Heart right ventricle (tissue), 16 donors: ENCODE measurements at regions of chr6 and their contacts with region 1.

Region 1: DNA sequence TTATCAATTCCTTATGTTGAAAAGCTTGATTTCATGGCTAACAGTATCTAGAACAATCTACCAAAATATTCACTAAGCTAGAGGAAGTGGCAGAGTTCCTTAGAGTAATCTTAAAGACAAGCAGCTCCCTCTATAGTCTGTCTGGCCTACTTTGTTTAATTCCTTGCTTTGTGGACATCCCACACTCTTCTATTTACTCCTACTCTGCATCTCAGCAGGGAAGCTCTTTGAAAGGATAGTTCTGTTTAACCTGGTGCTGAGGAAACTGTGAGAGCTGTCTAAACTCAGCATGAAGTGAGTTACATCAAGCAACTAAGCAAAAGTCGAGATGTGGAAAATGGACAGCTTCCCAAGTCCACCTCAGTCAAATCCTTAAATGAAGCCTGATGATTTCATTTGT is 4.3 kb downstream of the REV3L start:
- DNase-seq: no peak
- ATAC-seq: no peak
- H3K4me3 ChIP-seq: no peak overlapping the region
- H3K27ac ChIP-seq: peak overlapping the region in 1 of 10 donors; percentile 6
- H3K4me1 ChIP-seq: peaks cover 0 to 52% (median 41%) of the 10 kb centered on the region in 9 donors
- H3K27me3 ChIP-seq: no peaks in the 10 kb centered on the region
- CTCF ChIP-seq: peak in 6 of 9 donors; percentile 29 to 59 (median 48)

Region 2: DNA sequence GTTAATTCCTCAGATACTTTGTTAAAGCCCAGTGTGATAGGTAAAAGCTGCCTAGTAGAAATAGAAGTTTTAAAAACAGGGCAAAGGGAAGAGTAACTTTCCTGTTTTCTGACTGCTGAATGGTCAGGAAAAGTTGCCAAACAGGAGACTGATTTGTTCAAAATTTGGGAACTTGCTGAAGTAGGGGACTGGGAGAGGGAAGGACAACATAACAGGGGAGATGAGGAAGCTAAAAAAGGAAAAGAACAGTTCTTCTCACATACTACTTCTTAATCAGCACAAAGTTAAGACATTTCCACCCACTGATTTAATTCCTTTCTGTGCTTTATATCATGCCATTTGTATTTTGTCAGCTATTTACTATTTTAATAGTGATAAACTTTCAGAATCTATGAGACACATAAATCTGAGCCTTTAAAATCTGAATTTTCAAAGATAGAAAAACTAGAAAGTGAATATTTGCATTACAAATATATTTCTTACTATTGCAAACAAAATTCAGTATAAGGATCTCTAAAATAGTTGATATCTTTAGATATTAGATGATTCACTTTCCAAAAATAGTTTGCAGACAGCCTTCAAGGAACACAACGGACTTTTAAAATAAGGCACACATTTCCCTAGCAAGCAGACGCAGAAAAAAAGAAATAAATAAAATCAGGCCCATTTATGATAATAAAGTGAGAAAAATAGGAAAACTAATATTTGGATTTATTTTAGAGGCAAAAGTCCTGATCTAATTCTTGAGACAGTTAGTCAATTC is 428.3 kb before region 1 on chr6:
- intact Hi-C with region 1: no loop called
- DNase-seq: no peak
- ATAC-seq: peak in 2 of 8 donors; percentile 16 to 47
- H3K4me3 ChIP-seq: no peak overlapping the region
- H3K27ac ChIP-seq: peak overlapping the region in 1 of 10 donors; percentile 60
- H3K4me1 ChIP-seq: peaks cover 0 to 15% (median 5%) of the 10 kb centered on the region in 9 donors
- H3K27me3 ChIP-seq: no peaks in the 10 kb centered on the region
- CTCF ChIP-seq: no peak

Region 3: DNA sequence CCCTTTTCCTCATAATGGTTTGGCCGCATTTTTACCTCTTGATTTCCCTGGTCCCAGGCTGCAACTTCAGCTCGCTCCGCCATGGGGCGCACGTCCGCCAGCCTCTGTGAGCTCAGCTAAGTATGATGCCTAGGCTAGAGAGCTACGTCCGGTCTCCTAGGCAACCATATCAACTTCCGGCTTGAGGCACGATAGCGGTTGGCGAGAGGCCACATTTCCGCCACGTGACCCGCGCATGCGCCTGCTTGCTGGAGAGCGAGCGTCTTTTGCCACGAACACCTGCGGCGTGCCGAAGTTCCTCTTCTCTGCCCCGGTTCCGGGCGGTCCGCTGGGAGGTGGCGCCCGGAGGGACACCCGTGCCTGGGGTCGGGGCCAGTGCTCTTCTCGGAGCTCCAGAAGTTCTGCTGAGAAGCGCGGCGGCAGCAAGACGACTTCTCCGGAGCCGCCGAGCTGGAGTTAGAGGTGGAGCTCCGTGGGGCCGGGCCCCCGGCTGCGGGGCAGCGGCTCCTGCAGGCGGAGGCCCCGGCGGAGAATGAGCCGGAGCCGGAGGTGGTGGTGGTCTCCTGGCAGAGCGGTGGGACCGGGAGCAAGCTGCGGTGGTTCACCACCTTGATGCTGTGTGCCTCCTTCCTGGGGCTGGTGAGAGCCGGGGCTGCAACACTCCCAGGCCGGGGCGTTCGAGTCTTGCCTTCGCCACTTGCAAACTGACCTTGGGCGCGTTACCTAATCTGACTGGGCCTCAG is 219.5 kb before region 1 on chr6:
- intact Hi-C with region 1: loop called in 3 of 10 experiments (anchors 5 to 10 kb)
- DNase-seq: peak; percentile 99
- ATAC-seq: peak; percentile 98 to 99 (median 99)
- H3K4me3 ChIP-seq: peak overlapping the region; percentile 57 to 96 (median 70)
- H3K27ac ChIP-seq: peak overlapping the region in 9 of 10 donors; percentile 71 to 92 (median 88)
- H3K4me1 ChIP-seq: peaks cover 0 to 27% (median 17%) of the 10 kb centered on the region in 9 donors
- H3K27me3 ChIP-seq: peaks cover 0 to 14% (median 2%) of the 10 kb centered on the region in 7 donors
- CTCF ChIP-seq: peak; percentile 90 to 98 (median 95)

Region 4: GRCh38 chr6:111353912-111354462 is 124.8 kb before region 1 on chr6:
- intact Hi-C with region 1: loop called in 2 of 10 experiments (anchors 5 to 10 kb)
- DNase-seq: no peak
- ATAC-seq: peak in 4 of 8 donors; percentile 21 to 48 (median 42)
- H3K4me3 ChIP-seq: no peak overlapping the region
- H3K27ac ChIP-seq: peak overlapping the region in 5 of 10 donors; percentile 6 to 36 (median 27)
- H3K4me1 ChIP-seq: peaks cover 0 to 28% (median 11%) of the 10 kb centered on the region in 9 donors
- H3K27me3 ChIP-seq: no peaks in the 10 kb centered on the region
- CTCF ChIP-seq: no peak

Region 5: GRCh38 chr6:111361648-111362047 is 117.1 kb before region 1 on chr6:
- intact Hi-C with region 1: loop called in 6 of 10 experiments (anchors 10 kb)
- DNase-seq: peak in 1 of 2 donors; percentile 38
- ATAC-seq: peak in 4 of 8 donors; percentile 34 to 61 (median 55)
- H3K4me3 ChIP-seq: no peak overlapping the region
- H3K27ac ChIP-seq: no peak overlapping the region
- H3K4me1 ChIP-seq: no peaks in the 10 kb centered on the region
- H3K27me3 ChIP-seq: no peaks in the 10 kb centered on the region
- CTCF ChIP-seq: peak in 8 of 9 donors; percentile 28 to 61 (median 47)

Region 6: DNA sequence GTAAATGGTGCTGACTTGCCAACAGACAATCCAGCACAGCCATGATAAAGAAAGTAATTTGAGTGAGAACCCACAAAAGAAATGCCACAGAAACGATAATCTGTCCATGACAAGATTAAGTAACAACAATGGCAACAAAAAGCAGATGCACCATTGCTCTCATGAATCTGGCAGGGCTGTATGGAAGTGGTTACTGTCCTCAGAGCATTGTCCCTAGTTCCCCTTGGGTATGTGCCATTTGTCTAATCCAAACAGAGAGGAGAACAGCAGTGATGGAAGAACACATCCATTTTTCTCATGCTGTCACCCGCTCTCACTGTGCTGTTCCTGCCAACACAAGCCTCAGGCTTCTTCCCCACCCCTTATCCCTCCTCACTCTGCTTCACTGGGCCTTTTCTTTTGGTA is 61.6 kb before region 1 on chr6:
- intact Hi-C with region 1: loop called in 1 of 10 experiments (anchors 10 kb)
- DNase-seq: peak in 1 of 2 donors; percentile 37
- ATAC-seq: peak; percentile 84 to 97 (median 86)
- H3K4me3 ChIP-seq: no peak overlapping the region
- H3K27ac ChIP-seq: peak overlapping the region in 3 of 10 donors; percentile 2 to 49 (median 39)
- H3K4me1 ChIP-seq: peaks cover 3 to 41% (median 31%) of the 10 kb centered on the region in 9 donors
- H3K27me3 ChIP-seq: no peaks in the 10 kb centered on the region
- CTCF ChIP-seq: no peak